Heart right ventricle (tissue), 16 donors: ENCODE measurements at regions of chr14 and their contacts with region 1.

Region 1: DNA sequence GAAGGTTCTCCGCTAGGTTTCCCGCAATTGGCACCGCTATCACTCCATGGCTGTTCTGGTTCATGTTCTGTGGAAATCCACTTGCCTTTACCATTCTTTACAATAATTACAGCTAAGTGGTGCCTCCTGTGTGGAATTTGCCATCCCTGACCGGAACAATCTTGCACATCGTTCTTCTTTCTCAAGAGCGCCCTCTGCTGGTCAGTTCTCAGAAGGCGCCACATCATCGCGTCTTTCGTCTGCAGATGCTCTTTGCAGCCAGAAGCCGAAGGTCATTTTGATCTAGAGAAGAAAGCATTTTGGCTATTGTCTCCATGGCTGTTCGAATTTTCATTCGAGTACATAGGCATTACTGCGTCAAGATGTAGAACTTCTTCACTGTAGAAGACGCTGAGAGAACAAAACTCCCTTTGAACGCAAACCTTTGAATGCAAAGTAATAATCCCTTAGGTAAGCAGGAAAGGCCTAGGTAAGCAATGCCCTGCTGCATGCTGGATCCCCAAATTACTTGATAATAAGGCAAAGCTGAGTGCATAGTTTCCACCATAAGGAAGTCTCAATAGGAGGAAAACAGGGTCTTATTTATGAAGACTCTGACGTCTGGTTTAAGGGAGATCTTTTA is 10.1 kb upstream of the RTRAF start:
- DNase-seq: peak; percentile 76 to 83
- ATAC-seq: peak; percentile 75 to 85 (median 78)
- H3K4me3 ChIP-seq: no peak overlapping the region
- H3K27ac ChIP-seq: peak overlapping the region in 5 of 10 donors; percentile 24 to 61 (median 41)
- H3K4me1 ChIP-seq: peaks cover 0 to 17% (median 0%) of the 10 kb centered on the region in 9 donors
- H3K27me3 ChIP-seq: no peaks in the 10 kb centered on the region
- CTCF ChIP-seq: peak; percentile 86 to 96 (median 95)

Region 2: GRCh38 chr14:51846631-51847488 is 132.3 kb before region 1 on chr14:
- intact Hi-C with region 1: loop called in 1 of 10 experiments (anchors 10 kb)
- DNase-seq: peak; percentile 14 to 61
- ATAC-seq: peak; percentile 71 to 86 (median 80)
- H3K4me3 ChIP-seq: peak overlapping the region in 7 of 10 donors; percentile 1 to 40 (median 32)
- H3K27ac ChIP-seq: peak overlapping the region in 6 of 10 donors; percentile 17 to 90 (median 33)
- H3K4me1 ChIP-seq: peaks cover 0 to 41% (median 6%) of the 10 kb centered on the region in 9 donors
- H3K27me3 ChIP-seq: no peaks in the 10 kb centered on the region
- CTCF ChIP-seq: no peak

Region 3: GRCh38 chr14:51860164-51860824 is 118.9 kb before region 1 on chr14 and contains the start of gene GNG2:
- intact Hi-C with region 1: loop called in 8 of 10 experiments (anchors 5 to 10 kb)
- DNase-seq: peak; percentile 78 to 85
- ATAC-seq: peak; percentile 97 to 99 (median 98)
- H3K4me3 ChIP-seq: peak within 1 kb of the TSS; percentile 20 to 69 (median 54)
- H3K27ac ChIP-seq: peak within 1 kb of the TSS in 9 of 10 donors; percentile 24 to 92 (median 52)
- H3K4me1 ChIP-seq: peaks cover 0 to 84% (median 7%) of the 10 kb centered on the region in 9 donors
- H3K27me3 ChIP-seq: peaks cover 0 to 9% (median 0%) of the 10 kb centered on the region in 7 donors
- CTCF ChIP-seq: no peak
- total RNA-seq, gene GNG2: 3.6 to 20.6 (median 8.0) TPM